Sigmoid colon (tissue), 7 donors: ENCODE measurements at regions of chr18 and their contacts with region 1.

Region 1: DNA sequence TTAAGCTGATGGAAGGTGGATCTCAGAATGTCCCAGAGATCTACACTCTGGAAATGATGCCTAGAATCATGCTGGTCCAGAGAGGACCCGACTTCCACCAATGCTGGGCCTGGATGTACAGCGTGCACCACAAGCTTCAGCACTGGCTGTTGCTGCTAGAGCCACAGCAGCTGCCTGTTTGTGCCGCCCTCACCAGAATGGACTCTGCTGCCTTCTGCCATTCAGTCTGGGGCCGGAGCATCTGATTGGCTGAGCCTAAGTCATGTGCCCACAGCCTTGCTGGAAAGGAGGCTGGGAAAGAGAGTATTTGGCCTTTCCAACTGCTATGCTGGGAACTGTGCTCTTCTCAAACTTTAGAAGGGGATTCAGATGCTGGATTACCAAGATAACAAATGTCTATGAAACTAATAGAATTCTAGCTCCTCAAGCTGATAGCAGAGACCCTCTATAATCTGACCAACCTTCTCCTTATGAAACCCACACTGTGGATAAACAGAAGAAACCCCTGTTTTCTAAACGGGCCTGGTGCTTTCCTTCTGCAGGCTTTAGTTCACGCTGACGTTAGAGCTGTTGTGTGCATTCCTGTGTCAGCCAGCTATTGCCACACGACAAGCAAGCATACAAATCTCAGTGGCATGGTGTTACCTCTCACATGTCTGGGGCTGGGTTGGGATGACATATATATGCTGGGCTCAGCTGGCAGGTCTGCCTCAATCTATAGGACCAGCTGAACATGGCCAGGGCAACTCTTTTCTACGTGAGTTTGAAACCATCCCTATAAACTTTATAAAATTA is 4.1 kb upstream of the LOXHD1 start:
- DNase-seq: no peak
- H3K4me3 ChIP-seq: no peak overlapping the region
- H3K27ac ChIP-seq: no peak overlapping the region
- H3K4me1 ChIP-seq: no peaks in the 10 kb centered on the region
- H3K27me3 ChIP-seq: no peaks in the 10 kb centered on the region
- CTCF ChIP-seq: no peak
- EP300 ChIP-seq: no peak
- POLR2A ChIP-seq: no peak

Region 2: DNA sequence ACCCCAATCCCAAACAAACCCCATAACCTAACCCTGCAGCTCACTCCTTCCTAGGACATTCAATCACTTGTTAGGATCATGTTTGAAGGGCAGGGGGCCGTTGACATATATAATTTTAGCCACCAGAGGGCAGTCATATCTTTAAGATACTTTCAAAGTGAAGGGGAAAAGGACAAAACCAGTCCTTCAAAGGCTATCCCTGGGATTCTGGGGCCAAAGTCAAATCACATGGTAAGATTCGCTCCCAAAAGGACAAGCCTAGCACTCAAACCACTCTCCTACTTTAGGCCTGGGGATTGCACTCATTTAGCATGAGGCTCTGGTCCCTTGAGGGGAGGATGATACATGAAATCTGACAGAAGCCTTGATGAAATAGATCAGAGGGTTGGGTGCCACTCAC is 512.3 kb before region 1 on chr18:
- intact Hi-C with region 1: loop called (anchors 10 kb)
- DNase-seq: no peak
- H3K4me3 ChIP-seq: no peak overlapping the region
- H3K27ac ChIP-seq: no peak overlapping the region
- H3K4me1 ChIP-seq: no peaks in the 10 kb centered on the region
- H3K27me3 ChIP-seq: no peaks in the 10 kb centered on the region
- CTCF ChIP-seq: peak in 3 of 4 experiments; percentile 37 to 58 (median 51)
- EP300 ChIP-seq: no peak
- POLR2A ChIP-seq: no peak